ENCODE measurements at regions of chr2 and their contacts with region 1.

Region 1: GRCh38 chr2:71941726-71942525 is 205.7 kb downstream of the CYP26B1 start:
- DNase-seq: no peak
- ATAC-seq: no peak
- H3K4me3 ChIP-seq: no peak overlapping the region
- H3K27ac ChIP-seq: no peak overlapping the region
- H3K4me1 ChIP-seq: no peaks in the 10 kb centered on the region
- H3K27me3 ChIP-seq: no peaks in the 10 kb centered on the region
- CTCF ChIP-seq: no peak
- POLR2A ChIP-seq: no peak
- RAD21 ChIP-seq: no peak

Region 2: DNA sequence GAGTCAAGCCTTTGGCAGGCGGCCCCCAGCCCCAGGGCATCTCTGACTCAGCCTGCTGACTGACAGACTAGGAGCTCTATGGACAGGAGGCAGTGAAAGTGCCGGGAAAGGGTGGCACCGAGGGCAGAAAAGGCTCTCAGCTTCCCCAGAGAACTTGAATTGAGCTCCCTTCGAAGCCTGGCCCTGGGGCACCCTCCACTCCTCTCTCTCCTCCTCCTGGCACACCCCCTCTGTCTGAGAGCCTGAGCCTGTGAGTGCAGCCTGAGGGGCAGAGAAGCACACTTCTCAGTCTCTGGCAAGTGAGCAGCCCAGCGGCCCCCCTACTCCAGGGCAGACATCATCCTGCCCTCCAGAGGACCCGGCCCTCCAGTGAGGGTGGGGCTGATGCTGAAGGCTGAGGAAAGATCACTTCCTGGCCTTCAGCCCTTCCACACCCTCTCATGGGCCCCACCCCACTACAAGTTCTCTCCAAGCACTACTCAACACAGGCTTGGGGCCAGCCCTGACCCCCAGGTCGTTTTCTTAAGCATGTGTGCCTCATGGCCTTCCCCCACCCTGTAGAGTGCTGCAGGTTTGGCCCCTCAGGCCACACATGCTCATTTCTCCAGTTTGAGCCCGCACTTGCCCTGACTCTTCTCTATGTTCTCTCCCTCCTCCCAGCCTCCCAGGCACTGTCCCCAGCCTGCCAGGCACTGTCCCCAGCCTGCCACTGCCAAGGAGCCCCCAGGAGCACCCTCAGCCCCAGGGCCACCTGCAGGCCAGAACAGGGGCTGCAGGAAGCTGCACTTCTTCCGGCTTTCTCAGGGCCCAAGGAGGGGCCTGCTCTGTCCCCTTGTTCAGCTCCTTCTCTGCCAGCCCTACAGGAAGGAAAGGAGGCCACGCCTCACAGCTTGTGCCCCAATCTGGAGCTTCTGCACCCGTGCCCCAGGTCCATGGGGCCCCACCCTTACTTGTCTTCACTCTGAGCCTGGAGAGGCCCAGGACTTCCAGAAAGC is 173.9 kb after region 1 on chr2:
- CTCF ChIA-PET with region 1: no interaction called
- POLR2A ChIA-PET with region 1: no interaction called
- RAD21 ChIA-PET with region 1: interaction called in 1 of 2 experiments, 10 read pairs
- intact Hi-C with region 1: no loop called
- DNase-seq: peak; percentile 68
- ATAC-seq: peak; percentile 85
- H3K4me3 ChIP-seq: peak overlapping the region in 1 of 2 experiments; percentile 33; a peak in 1 of 4 replicates
- H3K27ac ChIP-seq: peak overlapping the region; percentile 58
- H3K4me1 ChIP-seq: peaks cover 22 to 34% of the 10 kb centered on the region in 2 experiments
- H3K27me3 ChIP-seq: no peaks in the 10 kb centered on the region
- CTCF ChIP-seq: peak; percentile 13 to 77 (median 69); a peak in 5 of 6 replicates
- POLR2A ChIP-seq: no peak
- RAD21 ChIP-seq: peak; percentile 48

Measured in HCT116 (cell line).